Dendritic cell treated with granulocyte-macrophage colony-stimulating factor and Interleukin-4, amounts not matched to agents 40 ng/mL and 50 ng/mL, for 4 days (primary cell): ENCODE measurements at regions of chr18 and their contacts with region 1.

Region 1: DNA sequence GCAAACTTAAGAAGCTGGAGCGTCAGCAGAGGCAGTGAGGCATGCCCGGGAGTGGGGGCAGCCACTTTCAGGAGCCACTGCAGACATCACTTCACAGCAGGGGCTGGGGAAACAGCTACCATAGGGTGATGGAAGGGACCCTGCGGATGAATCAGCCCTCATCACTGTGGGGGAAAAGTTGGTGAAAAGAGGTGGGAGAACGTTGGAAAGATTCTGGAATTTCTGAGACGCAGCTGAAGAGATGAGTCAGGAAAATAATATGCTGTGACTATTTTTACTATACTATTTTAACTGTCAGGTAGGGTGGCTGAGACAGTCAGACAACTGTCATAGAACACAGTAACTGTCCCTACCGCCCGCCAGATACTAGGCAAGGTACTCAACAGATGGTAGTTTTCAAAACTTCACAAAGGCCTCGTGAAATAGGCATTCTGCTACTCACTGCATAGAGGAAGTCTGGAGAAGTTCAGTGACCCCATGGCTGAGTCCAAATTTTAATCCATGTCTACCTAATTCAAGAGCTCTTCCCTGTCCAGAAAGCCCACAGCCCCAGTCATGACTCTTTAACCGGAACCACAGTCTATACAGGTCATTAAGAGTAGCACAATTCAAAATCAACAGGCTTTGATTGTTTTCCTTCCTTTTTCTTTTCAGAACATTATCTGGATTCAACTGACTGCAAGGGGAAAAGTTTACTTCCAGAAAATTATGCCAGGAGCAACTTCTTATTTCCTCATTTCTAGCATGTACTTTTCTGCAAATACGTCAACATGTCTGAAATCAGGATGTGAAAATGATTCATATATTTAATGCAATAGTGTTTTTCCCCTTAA is 39.3 kb upstream of the EPB41L3 start:
- H3K4me3 Mint-ChIP-seq: peak overlapping the region; percentile 30
- H3K27ac Mint-ChIP-seq: peak overlapping the region; percentile 85
- H3K4me1 Mint-ChIP-seq: peaks cover 22% of the 10 kb centered on the region
- H3K27me3 Mint-ChIP-seq: peaks cover 10% of the 10 kb centered on the region

Region 2: GRCh38 chr18:5237723-5238370 is 345.2 kb before region 1 on chr18:
- intact Hi-C with region 1: loop called (anchors 10 kb)
- H3K4me3 Mint-ChIP-seq: peak overlapping the region; percentile 96
- H3K27ac Mint-ChIP-seq: peak overlapping the region; percentile 100
- H3K4me1 Mint-ChIP-seq: peaks cover 23% of the 10 kb centered on the region
- H3K27me3 Mint-ChIP-seq: peaks cover 12% of the 10 kb centered on the region

Region 3: GRCh38 chr18:5295981-5296705 is 286.9 kb before region 1 on chr18:
- intact Hi-C with region 1: loop called (anchors 10 kb)
- H3K4me3 Mint-ChIP-seq: peak overlapping the region; percentile 92
- H3K27ac Mint-ChIP-seq: peak overlapping the region; percentile 99
- H3K4me1 Mint-ChIP-seq: peaks cover 31% of the 10 kb centered on the region
- H3K27me3 Mint-ChIP-seq: no peaks in the 10 kb centered on the region

Region 4: DNA sequence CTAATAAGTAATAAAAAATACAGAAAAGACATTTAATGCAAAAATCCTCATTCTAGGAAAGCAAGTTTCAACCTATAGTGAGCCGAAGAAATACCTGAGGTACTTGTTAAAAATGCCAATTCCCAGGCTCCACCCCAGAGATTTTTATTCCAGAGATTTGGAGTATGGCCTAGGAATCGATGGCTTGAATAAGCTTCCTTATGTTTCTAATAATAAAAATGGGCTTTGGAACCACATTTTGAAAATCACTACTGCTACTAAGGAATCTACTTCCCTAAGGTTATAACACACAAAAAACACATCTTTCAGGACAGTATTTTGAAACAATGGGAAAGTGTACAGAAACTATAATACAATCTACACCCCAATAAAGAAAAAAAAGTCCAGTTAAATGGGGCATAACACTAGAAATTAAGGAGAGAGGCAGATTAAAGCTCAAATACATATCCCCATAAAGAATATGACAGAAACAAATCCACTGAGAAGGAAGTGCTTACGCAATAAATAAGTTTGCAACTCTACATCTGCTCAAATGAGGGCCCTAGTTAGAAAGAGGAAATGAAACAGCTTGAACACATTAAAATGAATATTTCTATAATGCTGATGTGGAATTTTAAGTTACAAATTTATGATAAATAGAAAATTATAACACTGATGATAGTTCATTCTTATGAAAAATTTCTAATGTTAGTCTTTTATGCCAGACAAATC is 142.9 kb before region 1 on chr18:
- intact Hi-C with region 1: loop called (anchors 5 kb)
- H3K4me3 Mint-ChIP-seq: no peak overlapping the region
- H3K27ac Mint-ChIP-seq: peak overlapping the region; percentile 79
- H3K4me1 Mint-ChIP-seq: peaks cover 40% of the 10 kb centered on the region
- H3K27me3 Mint-ChIP-seq: no peaks in the 10 kb centered on the region

Region 5: DNA sequence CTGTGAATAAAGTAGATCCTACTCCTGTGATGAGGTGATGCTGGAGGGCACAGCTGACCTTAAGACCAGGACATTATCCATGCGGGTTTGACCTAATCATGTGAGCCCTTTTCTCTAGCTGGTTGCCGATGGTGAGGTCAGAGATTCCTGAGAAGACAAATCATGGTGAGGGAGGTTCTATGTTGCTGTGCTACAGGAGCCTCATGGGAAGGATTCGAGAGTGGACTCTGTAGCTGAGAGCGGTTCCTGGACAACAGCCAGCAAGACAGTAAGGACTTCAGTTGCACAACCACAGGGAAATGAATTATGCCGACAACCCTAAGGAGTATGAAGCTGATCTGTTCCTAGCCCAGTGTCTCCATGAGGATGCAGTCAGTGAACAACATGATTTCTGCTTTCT is 119.7 kb before region 1 on chr18:
- intact Hi-C with region 1: loop called (anchors 5 kb)
- H3K4me3 Mint-ChIP-seq: peak overlapping the region; percentile 21
- H3K27ac Mint-ChIP-seq: peak overlapping the region; percentile 81
- H3K4me1 Mint-ChIP-seq: peaks cover 71% of the 10 kb centered on the region
- H3K27me3 Mint-ChIP-seq: no peaks in the 10 kb centered on the region

Region 6: GRCh38 chr18:5546660-5547059 is 36.4 kb before region 1 on chr18:
- intact Hi-C with region 1: loop called (anchors 2 kb)
- H3K4me3 Mint-ChIP-seq: no peak overlapping the region
- H3K27ac Mint-ChIP-seq: no peak overlapping the region
- H3K4me1 Mint-ChIP-seq: peaks cover 23% of the 10 kb centered on the region
- H3K27me3 Mint-ChIP-seq: peaks cover 5% of the 10 kb centered on the region

Region 7: GRCh38 chr18:5746844-5747243 is 163.8 kb after region 1 on chr18:
- intact Hi-C with region 1: no loop called
- H3K4me3 Mint-ChIP-seq: no peak overlapping the region
- H3K27ac Mint-ChIP-seq: no peak overlapping the region
- H3K4me1 Mint-ChIP-seq: no peaks in the 10 kb centered on the region
- H3K27me3 Mint-ChIP-seq: peaks cover 1% of the 10 kb centered on the region

Region 8: GRCh38 chr18:5824370-5824984 is 241.4 kb after region 1 on chr18:
- intact Hi-C with region 1: loop called (anchors 5 kb)
- H3K4me3 Mint-ChIP-seq: no peak overlapping the region
- H3K27ac Mint-ChIP-seq: peak overlapping the region; percentile 19
- H3K4me1 Mint-ChIP-seq: no peaks in the 10 kb centered on the region
- H3K27me3 Mint-ChIP-seq: peaks cover 12% of the 10 kb centered on the region

Region 9: GRCh38 chr18:6543330-6543908 is 960.4 kb after region 1 on chr18:
- intact Hi-C with region 1: no loop called
- H3K4me3 Mint-ChIP-seq: no peak overlapping the region
- H3K27ac Mint-ChIP-seq: no peak overlapping the region
- H3K4me1 Mint-ChIP-seq: no peaks in the 10 kb centered on the region
- H3K27me3 Mint-ChIP-seq: peaks cover 2% of the 10 kb centered on the region